Caco-2 (cell line): ENCODE measurements at regions of chrX and their contacts with region 1.

Region 1: GRCh38 chrX:31658360-31658759 is 586.5 kb upstream of the FTHL17 start:
- DNase-seq: no peak
- H3K4me3 ChIP-seq: no peak overlapping the region
- H3K4me3 Mint-ChIP-seq: no peak overlapping the region
- H3K27ac Mint-ChIP-seq: no peak overlapping the region
- H3K4me1 ChIP-seq: no peaks in the 10 kb centered on the region
- H3K4me1 Mint-ChIP-seq: no peaks in the 10 kb centered on the region
- H3K27me3 ChIP-seq: no peaks in the 10 kb centered on the region
- H3K27me3 Mint-ChIP-seq: no peaks in the 10 kb centered on the region
- CTCF ChIP-seq: peak; percentile 28 to 40

Region 2: GRCh38 chrX:31213941-31214340 is 444.4 kb before region 1 on chrX:
- CTCF ChIA-PET with region 1: no interaction called
- POLR2A ChIA-PET with region 1: no interaction called
- intact Hi-C with region 1: loop called (anchors 2 kb)
- DNase-seq: peak in 1 of 2 experiments; percentile 25
- H3K4me3 ChIP-seq: no peak overlapping the region
- H3K4me3 Mint-ChIP-seq: no peak overlapping the region
- H3K27ac Mint-ChIP-seq: no peak overlapping the region
- H3K4me1 ChIP-seq: no peaks in the 10 kb centered on the region
- H3K4me1 Mint-ChIP-seq: peaks cover 13% of the 10 kb centered on the region
- H3K27me3 ChIP-seq: no peaks in the 10 kb centered on the region
- H3K27me3 Mint-ChIP-seq: no peaks in the 10 kb centered on the region
- CTCF ChIP-seq: peak; percentile 36 to 62